Activated naive CD8-positive, alpha-beta T cell treated with anti-CD3 and anti-CD28 coated beads, Interleukin-2, amount 10 ng/mL, durations not matched to agents 7 days and 5 days (primary cell): ENCODE measurements at regions of chr11 and their contacts with region 1.

Region 1: DNA sequence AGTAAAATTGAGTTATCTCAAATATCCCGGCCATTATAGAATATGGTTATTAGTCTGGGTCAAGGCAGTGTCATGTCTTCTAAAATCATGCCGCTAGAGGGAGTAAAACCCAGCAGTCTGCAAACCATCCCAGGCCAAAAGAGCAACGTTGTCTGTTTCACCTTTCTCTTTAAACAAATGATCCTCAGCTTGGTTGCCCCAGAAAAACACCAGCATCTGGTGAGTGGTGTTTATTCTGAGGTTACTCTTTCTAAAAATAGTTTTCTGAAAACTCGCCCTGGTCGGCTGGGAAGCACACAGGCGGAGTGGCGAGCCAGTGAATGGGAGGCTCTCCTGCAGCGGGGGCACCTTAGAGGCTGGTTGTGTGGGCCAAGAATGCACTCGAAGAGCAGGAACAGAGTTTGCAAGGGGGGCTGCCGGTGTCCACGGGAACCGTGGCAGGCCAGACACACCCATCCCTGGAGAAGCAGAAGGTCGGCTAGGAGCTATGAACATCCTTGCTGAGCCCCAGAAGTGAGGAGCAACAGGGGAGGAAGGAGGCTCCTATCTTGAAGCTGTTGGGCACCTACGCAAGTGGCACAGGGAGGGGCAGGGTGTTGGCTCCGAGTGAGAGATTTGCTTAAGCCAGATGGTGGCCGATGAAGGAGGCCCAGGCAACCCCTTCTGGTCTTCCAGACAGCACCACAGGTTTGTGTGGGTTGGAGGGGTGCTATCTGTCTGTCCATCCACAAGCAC is 297.1 kb downstream of the ETS1 start:
- DNase-seq: peak; percentile 76
- ATAC-seq: peak; percentile 75
- H3K4me3 Mint-ChIP-seq: peak overlapping the region; percentile 93
- H3K27ac Mint-ChIP-seq: peak overlapping the region; percentile 82
- H3K4me1 Mint-ChIP-seq: peaks cover 62% of the 10 kb centered on the region
- H3K27me3 Mint-ChIP-seq: no peaks in the 10 kb centered on the region

Region 2: GRCh38 chr11:128246364-128246801 is 43.9 kb before region 1 on chr11:
- POLR2A ChIA-PET with region 1: no interaction called
- DNase-seq: no peak
- ATAC-seq: no peak
- H3K4me3 Mint-ChIP-seq: no peak overlapping the region
- H3K27ac Mint-ChIP-seq: no peak overlapping the region
- H3K4me1 Mint-ChIP-seq: no peaks in the 10 kb centered on the region
- H3K27me3 Mint-ChIP-seq: peaks cover 12% of the 10 kb centered on the region

Region 3: GRCh38 chr11:128302425-128303186 is 12.3 kb after region 1 on chr11:
- POLR2A ChIA-PET with region 1: interaction called, 99 read pairs
- DNase-seq: no peak
- ATAC-seq: peak; percentile 90
- H3K4me3 Mint-ChIP-seq: peak overlapping the region; percentile 91
- H3K27ac Mint-ChIP-seq: peak overlapping the region; percentile 96
- H3K4me1 Mint-ChIP-seq: peaks cover 66% of the 10 kb centered on the region
- H3K27me3 Mint-ChIP-seq: no peaks in the 10 kb centered on the region

Region 4: GRCh38 chr11:128463371-128463829 is 173.1 kb after region 1 on chr11:
- POLR2A ChIA-PET with region 1: interaction called, 19 read pairs
- DNase-seq: no peak
- ATAC-seq: no peak
- H3K4me3 Mint-ChIP-seq: peak overlapping the region; percentile 76
- H3K27ac Mint-ChIP-seq: peak overlapping the region; percentile 88
- H3K4me1 Mint-ChIP-seq: peaks cover 74% of the 10 kb centered on the region
- H3K27me3 Mint-ChIP-seq: no peaks in the 10 kb centered on the region

Region 5: DNA sequence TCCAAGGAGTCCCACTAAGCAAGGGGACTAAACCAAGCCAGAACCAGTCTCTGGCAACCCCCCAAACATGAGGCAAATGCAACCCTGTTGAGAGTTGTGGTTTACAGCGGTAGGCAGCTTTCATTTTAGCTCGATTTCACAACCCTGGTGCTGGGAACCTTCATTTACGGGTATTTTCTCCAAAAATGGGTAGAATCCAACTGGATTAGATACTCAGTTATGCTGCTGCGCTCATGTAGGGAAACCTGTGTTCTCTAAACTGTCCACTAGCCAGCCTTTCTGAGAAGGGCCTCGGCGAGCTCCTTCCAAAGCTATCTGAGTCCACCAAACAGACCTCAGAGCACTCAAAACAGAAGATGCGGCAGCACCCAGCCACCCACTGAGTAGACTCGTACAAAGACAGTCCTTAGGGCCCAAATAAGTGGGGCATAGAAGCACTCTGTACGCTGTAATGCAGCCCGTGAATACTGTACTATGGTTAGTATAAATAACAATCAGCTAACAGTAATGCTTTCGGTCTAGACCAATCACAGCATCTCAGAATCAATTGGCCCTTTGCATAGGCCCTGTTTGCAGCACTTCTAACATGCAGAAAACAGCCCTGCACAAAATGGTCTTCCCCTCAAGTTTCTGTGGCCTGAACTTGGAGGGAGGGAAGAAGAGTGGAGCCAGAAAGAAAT is 192.4 kb after region 1 on chr11:
- POLR2A ChIA-PET with region 1: interaction called, 15 read pairs
- DNase-seq: no peak
- ATAC-seq: peak; percentile 61
- H3K4me3 Mint-ChIP-seq: peak overlapping the region; percentile 86
- H3K27ac Mint-ChIP-seq: peak overlapping the region; percentile 97
- H3K4me1 Mint-ChIP-seq: peaks cover 88% of the 10 kb centered on the region
- H3K27me3 Mint-ChIP-seq: no peaks in the 10 kb centered on the region

Region 6: DNA sequence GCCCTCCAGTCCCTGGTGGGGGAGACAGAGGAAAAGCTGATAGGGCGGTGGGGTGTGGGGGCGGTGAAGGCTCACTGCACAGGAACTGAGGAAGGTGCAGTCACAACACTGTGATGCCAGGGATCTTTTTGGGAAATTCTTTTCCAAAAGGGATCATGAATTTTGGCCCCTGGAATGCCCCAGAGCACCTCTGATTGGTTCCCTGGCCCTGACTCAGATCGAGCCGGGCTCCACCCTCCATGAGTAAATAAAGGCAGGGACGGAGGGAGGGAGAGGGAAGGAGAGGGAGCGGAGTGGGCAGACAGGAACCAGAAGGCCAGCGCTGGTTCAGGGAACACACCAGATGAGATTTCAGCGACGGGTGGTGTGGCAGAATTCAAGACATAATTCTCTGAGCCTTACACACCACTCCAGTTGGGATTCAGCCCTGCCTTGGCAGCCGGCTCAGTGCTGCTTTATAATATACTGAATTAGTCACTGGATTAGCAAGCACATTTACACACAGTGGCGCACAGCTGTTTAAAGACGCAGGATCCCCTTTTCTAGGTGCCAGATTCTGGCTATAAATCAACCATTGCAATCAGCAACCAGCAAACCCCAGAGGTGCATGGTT is 216.8 kb after region 1 on chr11:
- POLR2A ChIA-PET with region 1: interaction called, 19 read pairs
- DNase-seq: no peak
- ATAC-seq: peak; percentile 3
- H3K4me3 Mint-ChIP-seq: peak overlapping the region; percentile 98
- H3K27ac Mint-ChIP-seq: peak overlapping the region; percentile 89
- H3K4me1 Mint-ChIP-seq: peaks cover 87% of the 10 kb centered on the region
- H3K27me3 Mint-ChIP-seq: no peaks in the 10 kb centered on the region

Region 7: GRCh38 chr11:128522055-128522942 is 232.0 kb after region 1 on chr11:
- POLR2A ChIA-PET with region 1: interaction called, 160 read pairs
- DNase-seq: peak; percentile 95
- ATAC-seq: peak; percentile 79
- H3K4me3 Mint-ChIP-seq: peak overlapping the region; percentile 98
- H3K27ac Mint-ChIP-seq: peak overlapping the region; percentile 97
- H3K4me1 Mint-ChIP-seq: peaks cover 45% of the 10 kb centered on the region
- H3K27me3 Mint-ChIP-seq: no peaks in the 10 kb centered on the region

Region 8: DNA sequence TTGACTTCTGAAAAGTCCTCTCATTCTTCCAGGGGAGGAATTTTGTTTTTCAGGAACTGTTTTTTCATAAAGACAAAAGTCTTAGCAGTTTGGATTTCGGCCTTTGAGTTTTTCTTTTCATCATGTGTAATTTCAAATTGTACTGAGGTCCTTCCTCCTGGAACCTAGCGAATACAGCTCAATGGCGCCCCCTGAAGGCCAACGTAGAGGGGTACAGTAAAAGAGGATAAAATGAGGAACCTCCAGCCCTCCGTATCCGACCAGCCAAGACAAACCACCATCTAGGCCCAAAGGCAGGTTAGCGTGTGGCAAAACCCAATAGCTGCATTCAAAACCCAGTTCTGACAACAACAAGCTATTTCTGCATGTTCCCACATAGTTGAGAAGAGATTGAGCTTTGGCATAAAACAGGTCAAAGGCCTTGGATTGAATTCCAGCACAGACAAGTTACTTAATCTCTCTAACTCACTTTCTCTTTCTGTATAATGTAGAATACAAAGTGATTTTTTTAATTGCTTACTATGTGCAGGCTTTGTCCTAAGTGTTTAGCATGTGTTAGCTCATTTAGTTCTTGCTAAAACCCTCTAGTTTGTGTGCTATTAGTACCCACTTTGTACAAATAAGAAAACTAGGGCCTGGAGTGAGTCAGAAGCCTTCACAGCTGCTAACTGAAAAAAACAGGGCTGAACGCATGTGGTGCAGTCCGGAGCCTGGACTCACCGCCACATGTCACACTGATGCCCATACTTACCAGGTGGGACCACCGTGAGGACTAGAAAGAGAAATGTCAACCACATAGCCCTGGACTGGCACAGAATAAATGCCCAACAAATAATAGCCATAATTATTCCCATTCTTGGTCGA is 340.3 kb after region 1 on chr11:
- POLR2A ChIA-PET with region 1: interaction called, 46 read pairs
- DNase-seq: peak; percentile 93
- ATAC-seq: peak; percentile 75
- H3K4me3 Mint-ChIP-seq: peak overlapping the region; percentile 84
- H3K27ac Mint-ChIP-seq: peak overlapping the region; percentile 93
- H3K4me1 Mint-ChIP-seq: peaks cover 63% of the 10 kb centered on the region
- H3K27me3 Mint-ChIP-seq: no peaks in the 10 kb centered on the region